Endothelial cell of umbilical vein (primary cell): ENCODE measurements at regions of chr3 and their contacts with region 1.

Region 1: DNA sequence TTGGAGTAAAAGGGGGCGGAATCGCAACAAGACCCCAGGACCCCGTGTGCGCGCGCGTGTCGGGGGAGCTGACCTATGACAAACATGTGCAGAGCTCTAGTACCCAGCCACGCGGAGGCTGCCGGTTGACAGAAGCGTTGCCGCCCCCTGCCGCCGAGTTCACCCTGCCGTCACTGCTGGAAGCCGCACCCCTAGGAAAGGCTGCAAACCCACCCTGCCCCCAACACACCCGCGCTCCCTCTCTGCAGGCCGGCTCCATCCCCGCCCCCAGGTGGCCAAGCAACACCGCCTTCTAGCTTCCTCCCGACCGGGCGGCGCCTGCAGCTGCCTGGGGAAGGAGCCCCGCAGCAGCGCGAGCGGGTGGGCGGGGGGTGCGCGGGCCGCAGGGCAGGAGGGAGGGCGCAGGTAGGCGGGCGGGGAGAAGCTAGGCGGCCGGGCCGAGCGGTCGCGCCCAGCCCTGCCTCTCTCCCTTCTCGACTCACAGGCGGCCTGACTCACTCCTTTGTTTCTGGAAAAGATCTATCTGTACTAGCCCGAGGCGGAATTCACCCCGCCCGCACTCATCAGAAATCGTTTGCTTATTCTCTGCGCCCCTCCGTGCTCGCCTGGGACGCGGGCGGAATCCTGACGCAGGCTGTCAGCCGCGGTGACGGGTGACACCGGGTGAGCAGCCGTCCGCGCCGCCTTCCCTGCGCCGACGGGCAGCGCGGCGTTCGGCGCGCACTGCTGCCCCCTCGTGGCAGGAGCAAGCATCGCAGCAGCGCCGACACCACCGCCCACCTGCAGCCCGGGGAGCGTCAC is 160.8 kb downstream of the GAP43 start:
- DNase-seq: peak; percentile 89
- H3K4me3 ChIP-seq: peak overlapping the region; percentile 44 to 67 (median 56)
- H3K27ac ChIP-seq: peak overlapping the region; percentile 85
- H3K4me1 ChIP-seq: peaks cover 5% of the 10 kb centered on the region
- H3K27me3 ChIP-seq: peaks cover 4 to 6% of the 10 kb centered on the region in 2 experiments
- CTCF ChIP-seq: peak; percentile 98 to 99
- POLR2A ChIP-seq: no peak

Region 2: DNA sequence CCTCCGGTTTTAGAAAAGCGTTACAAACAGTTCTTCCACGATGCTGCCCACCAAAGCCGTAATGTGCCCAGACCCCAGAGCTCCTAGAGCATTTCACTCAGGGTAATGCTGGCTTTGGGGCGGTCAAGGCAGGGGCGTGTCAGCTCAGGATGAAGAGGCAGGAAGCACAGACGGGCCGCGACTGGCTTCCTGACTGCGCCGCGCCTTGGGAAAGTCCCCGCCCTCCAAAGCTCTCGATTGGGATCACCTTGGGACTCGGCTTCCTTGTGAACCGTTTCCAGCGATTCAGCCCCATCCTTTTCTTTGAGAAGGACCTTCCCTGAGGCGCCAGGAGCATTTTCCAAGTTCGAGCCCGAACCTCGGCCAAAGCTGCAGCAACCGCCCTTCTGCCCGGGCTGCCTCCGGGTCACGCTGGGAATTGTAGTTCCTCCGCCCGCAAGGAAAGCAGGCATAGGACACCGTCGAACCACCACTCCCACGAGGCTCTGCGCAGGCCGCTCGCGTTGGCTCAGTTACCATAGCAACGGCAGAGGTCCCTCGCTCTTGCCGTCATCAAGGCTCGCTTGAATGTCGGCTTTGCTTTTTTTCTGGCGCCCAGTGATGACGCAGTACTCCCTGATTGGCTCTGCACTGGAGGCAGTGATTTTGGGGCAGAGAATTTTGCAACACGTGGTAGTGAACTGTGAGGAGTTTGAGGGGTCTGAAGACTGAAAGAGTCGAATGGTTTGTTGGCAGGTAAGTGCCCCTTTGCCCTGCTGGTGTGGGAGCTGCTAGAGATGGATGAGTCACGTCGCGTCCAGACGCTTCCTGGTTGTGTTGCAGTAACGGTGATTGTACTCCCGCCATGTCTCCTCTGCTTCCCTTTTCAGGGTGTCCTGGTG is 1727.8 kb before region 1 on chr3 and contains the starts of genes CCDC191 and QTRT2:
- CTCF ChIA-PET with region 1: no interaction called
- POLR2A ChIA-PET with region 1: no interaction called
- dilution Hi-C with region 1: no loop called
- intact Hi-C with region 1: loop called (anchors 5 kb)
- DNase-seq: peak; percentile 99
- H3K4me3 ChIP-seq: peak within 1 kb of the TSS; percentile 50 to 88 (median 86)
- H3K27ac ChIP-seq: peak within 1 kb of the TSS; percentile 31
- H3K4me1 ChIP-seq: peaks cover 16% of the 10 kb centered on the region
- H3K27me3 ChIP-seq: no peaks in the 10 kb centered on the region
- CTCF ChIP-seq: no peak
- POLR2A ChIP-seq: peak; percentile 55
- total RNA-seq, gene CCDC191: 3.8 and 4.9 TPM in 2 replicates
- total RNA-seq, gene QTRT2: 29.5 and 42.8 TPM in 2 replicates

Region 3: DNA sequence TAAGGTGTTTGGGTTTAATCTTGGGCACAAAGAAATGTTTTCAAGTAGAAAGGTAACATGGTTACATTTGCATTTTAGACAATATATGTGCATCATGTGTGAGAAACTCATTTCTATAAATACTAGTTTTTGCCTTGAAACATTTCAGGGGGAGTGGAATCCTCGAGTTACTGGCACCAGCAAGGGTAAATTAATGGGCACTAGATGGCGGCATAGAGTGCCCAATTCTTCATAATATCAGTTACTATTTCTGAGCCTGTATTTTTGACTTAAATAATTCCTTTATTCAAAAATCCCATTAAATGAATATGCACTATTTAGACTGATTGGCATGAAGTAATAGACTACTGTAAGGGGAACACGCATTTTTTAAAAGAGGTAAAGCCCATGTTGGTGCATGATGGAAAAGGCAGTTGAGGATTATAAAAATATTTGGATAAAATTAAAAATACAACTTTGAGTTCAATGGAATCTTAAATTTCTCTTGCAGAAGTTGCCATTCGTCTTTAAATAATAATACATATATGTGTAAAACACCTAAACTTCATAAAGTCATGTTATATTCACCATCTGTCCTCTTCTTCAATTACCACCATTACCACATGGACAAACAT is 743.4 kb before region 1 on chr3:
- CTCF ChIA-PET with region 1: interaction called, 6 read pairs
- POLR2A ChIA-PET with region 1: no interaction called
- dilution Hi-C with region 1: no loop called
- intact Hi-C with region 1: loop called (anchors 1 kb)
- DNase-seq: peak; percentile 67
- H3K4me3 ChIP-seq: no peak overlapping the region
- H3K27ac ChIP-seq: no peak overlapping the region
- H3K4me1 ChIP-seq: no peaks in the 10 kb centered on the region
- H3K27me3 ChIP-seq: no peaks in the 10 kb centered on the region
- CTCF ChIP-seq: peak; percentile 58 to 59
- POLR2A ChIP-seq: no peak

Region 4: GRCh38 chr3:115217678-115218451 is 566.3 kb before region 1 on chr3:
- CTCF ChIA-PET with region 1: interaction called, 25 read pairs
- POLR2A ChIA-PET with region 1: no interaction called
- dilution Hi-C with region 1: no loop called
- intact Hi-C with region 1: loop called (anchors 1 kb)
- DNase-seq: peak; percentile 75
- H3K4me3 ChIP-seq: peak overlapping the region in 1 of 3 experiments; percentile 12
- H3K27ac ChIP-seq: no peak overlapping the region
- H3K4me1 ChIP-seq: peaks cover 10% of the 10 kb centered on the region
- H3K27me3 ChIP-seq: no peaks in the 10 kb centered on the region
- CTCF ChIP-seq: peak; percentile 44 to 51
- POLR2A ChIP-seq: no peak

Region 5: DNA sequence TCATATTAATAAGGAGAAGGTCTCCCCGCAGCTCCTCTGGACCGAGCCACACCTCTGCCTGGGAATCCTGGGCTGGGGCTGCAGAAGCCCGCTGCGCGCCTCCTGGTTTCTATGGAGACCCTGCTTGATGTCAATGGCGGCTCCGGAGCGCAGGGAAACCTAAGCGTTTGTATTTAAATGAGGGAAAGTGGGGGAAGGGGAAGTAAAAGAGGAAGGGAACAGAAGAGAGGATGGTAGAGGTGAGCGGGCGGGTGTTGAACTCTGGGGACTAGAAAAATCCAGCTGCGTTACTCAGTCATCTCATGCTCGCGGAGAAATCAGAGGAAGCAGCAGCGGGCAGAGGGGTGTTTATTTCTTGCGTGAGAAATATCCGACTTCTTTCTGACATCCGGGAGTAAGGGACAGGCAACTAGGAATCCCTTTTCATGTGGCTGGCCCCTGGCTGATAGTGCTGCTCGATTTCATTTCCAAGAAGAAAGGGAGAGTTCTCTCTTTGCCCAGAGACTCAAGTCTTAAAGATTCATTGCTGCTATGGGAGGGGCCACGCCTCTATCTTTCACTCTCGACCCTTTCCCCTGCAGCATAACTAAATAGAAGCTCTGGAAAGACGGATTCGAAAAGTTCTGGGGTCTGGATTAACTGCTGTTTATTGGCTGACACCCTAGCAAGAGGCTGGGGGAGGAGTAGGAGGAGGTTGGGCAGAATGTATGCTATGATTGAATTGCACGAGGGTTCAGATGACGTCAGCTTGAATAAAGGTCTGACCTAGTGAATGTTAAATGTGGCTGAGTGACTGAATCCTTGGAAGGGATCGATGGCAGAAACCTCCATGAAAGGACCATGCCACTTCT is 271.3 kb before region 1 on chr3:
- CTCF ChIA-PET with region 1: no interaction called
- POLR2A ChIA-PET with region 1: no interaction called
- dilution Hi-C with region 1: no loop called
- intact Hi-C with region 1: loop called (anchors 10 kb)
- DNase-seq: peak; percentile 61
- H3K4me3 ChIP-seq: peak overlapping the region; percentile 41 to 83 (median 66)
- H3K27ac ChIP-seq: peak overlapping the region; percentile 66
- H3K4me1 ChIP-seq: peaks cover 12% of the 10 kb centered on the region
- H3K27me3 ChIP-seq: peaks cover 10 to 12% of the 10 kb centered on the region in 2 experiments
- CTCF ChIP-seq: no peak
- POLR2A ChIP-seq: no peak

Region 6: GRCh38 chr3:115692887-115693524 is 91.1 kb before region 1 on chr3:
- CTCF ChIA-PET with region 1: interaction called, 18 read pairs
- POLR2A ChIA-PET with region 1: no interaction called
- dilution Hi-C with region 1: no loop called
- intact Hi-C with region 1: loop called (anchors 1 kb)
- DNase-seq: peak; percentile 72
- H3K4me3 ChIP-seq: no peak overlapping the region
- H3K27ac ChIP-seq: no peak overlapping the region
- H3K4me1 ChIP-seq: no peaks in the 10 kb centered on the region
- H3K27me3 ChIP-seq: no peaks in the 10 kb centered on the region
- CTCF ChIP-seq: peak; percentile 75 to 77
- POLR2A ChIP-seq: no peak

Region 7: DNA sequence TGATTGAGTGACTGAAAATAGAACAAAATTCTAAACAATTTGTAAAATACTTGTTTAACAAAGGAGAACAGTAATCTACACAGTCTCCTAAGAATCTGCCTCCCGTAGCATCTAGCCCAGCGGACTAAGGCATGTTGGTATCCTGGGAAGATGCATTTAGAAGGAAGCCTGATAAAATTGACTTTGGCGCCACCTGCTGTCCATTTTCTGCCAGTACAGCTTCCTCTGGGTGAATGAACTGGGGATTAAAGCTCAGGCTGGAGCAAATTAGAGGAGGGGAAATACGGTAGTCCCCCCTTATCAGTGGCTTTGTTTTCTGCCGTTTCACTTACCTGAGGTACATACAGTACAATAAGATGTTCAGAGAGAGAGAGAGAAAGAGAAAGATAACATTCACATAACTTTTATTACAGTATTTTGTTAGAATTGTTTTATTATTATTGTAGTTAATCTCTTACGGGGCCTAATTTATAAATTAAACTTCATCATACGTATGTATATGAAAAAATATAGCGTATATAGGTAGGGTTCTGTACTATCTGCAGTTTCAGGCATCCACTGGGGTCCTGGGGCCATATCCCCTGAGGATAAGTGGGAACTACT is 30.7 kb after region 1 on chr3:
- CTCF ChIA-PET with region 1: interaction called, 34 read pairs
- POLR2A ChIA-PET with region 1: no interaction called
- dilution Hi-C with region 1: no loop called
- intact Hi-C with region 1: loop called (anchors 1 kb)
- DNase-seq: peak; percentile 71
- H3K4me3 ChIP-seq: no peak overlapping the region
- H3K27ac ChIP-seq: no peak overlapping the region
- H3K4me1 ChIP-seq: no peaks in the 10 kb centered on the region
- H3K27me3 ChIP-seq: peaks cover 10 to 11% of the 10 kb centered on the region in 2 experiments
- CTCF ChIP-seq: peak; percentile 76 to 93
- POLR2A ChIP-seq: no peak